HepG2 (cell line): ENCODE measurements at regions of chr12 and their contacts with region 1.

Region 1: DNA sequence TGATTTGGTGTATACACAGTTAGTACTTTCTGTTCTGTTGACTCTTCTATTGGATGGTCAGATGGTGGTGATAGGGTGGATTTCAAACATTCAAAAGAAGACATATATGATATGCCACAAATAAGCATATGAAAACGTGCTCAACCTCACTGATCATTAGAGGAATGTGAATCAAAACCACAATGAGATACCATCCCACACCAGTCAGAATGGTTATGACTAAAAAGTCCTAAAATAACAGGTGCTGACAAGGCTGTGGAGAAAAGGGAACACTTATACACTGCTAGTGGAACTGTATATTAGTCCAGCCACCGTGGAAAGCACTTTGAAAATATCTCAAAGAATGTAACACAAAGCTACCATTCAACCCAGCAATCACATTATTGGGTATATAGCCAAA is 425.5 kb downstream of the C12orf50 start:
- DNase-seq: no peak
- ATAC-seq: no peak
- H3K4me3 ChIP-seq: no peak overlapping the region
- H3K27ac ChIP-seq: no peak overlapping the region
- H3K4me1 ChIP-seq: no peaks in the 10 kb centered on the region
- H3K27me3 ChIP-seq: no peaks in the 10 kb centered on the region
- CTCF ChIP-seq: no peak
- EP300 ChIP-seq: no peak
- POLR2A ChIP-seq: no peak
- RAD21 ChIP-seq: no peak

Region 2: DNA sequence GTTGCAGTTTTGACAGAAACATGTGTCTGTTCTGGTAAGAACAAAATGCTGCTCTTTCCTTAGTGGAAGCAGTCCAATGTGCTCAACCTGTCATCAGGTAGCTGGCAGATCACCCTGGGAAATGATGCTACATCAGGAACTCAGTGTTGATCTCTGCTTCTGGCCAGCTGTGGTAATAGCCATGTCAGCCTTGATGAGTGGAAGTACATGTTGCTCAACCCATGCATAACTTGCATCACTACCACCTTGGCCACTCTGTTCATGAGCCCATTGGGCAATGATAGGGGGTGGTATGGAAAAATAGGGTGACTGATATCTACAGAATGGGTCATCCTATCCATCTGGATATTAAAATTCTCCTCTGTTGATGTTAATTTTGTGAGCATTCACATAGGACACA is 14.5 kb after region 1 on chr12:
- CTCF ChIA-PET with region 1: no interaction called
- POLR2A ChIA-PET with region 1: no interaction called
- in situ Hi-C with region 1: no loop called
- intact Hi-C with region 1: loop called (anchors 1 kb)
- DNase-seq: no peak
- ATAC-seq: no peak
- H3K4me3 ChIP-seq: no peak overlapping the region
- H3K27ac ChIP-seq: no peak overlapping the region
- H3K4me1 ChIP-seq: no peaks in the 10 kb centered on the region
- H3K27me3 ChIP-seq: no peaks in the 10 kb centered on the region
- CTCF ChIP-seq: no peak
- EP300 ChIP-seq: no peak
- POLR2A ChIP-seq: no peak
- RAD21 ChIP-seq: no peak